CD4-positive, alpha-beta memory T cell (primary cell): ENCODE measurements at regions of chr2 and their contacts with region 1.

Region 1: DNA sequence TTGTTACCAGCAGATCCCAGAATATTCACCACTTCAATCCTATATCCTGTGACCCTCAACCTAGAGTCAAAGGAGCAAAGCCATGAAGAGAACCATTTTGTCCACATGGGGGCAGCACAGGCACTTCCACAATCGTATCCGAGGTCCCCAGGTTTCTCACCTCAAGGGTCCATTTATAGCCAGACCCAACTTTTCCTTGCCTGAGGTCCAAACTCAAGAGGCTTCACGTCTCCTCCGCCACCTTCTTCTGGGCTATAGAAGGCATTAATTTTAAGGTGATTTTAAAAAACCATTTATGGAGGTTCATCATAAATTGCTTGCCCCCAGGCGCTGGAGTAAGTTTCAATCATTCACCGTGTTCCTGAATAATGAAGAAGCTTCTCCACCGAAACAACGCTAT is 111.6 kb upstream of the NABP1 start:
- DNase-seq: peak; percentile 47 to 63 (median 52)
- H3K4me3 ChIP-seq: no peak overlapping the region
- H3K4me3 Mint-ChIP-seq: no peak overlapping the region
- H3K27ac ChIP-seq: no peak overlapping the region
- H3K27ac Mint-ChIP-seq: no peak overlapping the region
- H3K4me1 ChIP-seq: peaks cover 19% of the 10 kb centered on the region
- H3K4me1 Mint-ChIP-seq: peaks cover 15 to 33% (median 25%) of the 10 kb centered on the region in 4 donors
- H3K27me3 ChIP-seq: peaks cover 3% of the 10 kb centered on the region
- H3K27me3 Mint-ChIP-seq: peaks cover 11 to 21% of the 10 kb centered on the region in 2 donors

Region 2: GRCh38 chr2:191245046-191245868 is 321.1 kb before region 1 on chr2 and contains the start of gene MYO1B:
- CTCF ChIA-PET with region 1: no interaction called
- POLR2A ChIA-PET with region 1: no interaction called
- intact Hi-C with region 1: no loop called
- DNase-seq: peak; percentile 26 to 42 (median 39)
- H3K4me3 ChIP-seq: peak within 1 kb of the TSS; percentile 7 to 42
- H3K4me3 Mint-ChIP-seq: peak within 1 kb of the TSS; percentile 79 to 89 (median 86)
- H3K27ac ChIP-seq: no peak within 1 kb of the TSS
- H3K27ac Mint-ChIP-seq: peak within 1 kb of the TSS in 1 of 7 donors; percentile 52
- H3K4me1 ChIP-seq: peaks cover 9% of the 10 kb centered on the region
- H3K4me1 Mint-ChIP-seq: peaks cover 3 to 8% (median 6%) of the 10 kb centered on the region in 4 donors
- H3K27me3 ChIP-seq: no peaks in the 10 kb centered on the region
- H3K27me3 Mint-ChIP-seq: peaks cover 16% of the 10 kb centered on the region in 2 donors
- total RNA-seq, gene MYO1B: 0.12 to 0.14 TPM

Region 3: DNA sequence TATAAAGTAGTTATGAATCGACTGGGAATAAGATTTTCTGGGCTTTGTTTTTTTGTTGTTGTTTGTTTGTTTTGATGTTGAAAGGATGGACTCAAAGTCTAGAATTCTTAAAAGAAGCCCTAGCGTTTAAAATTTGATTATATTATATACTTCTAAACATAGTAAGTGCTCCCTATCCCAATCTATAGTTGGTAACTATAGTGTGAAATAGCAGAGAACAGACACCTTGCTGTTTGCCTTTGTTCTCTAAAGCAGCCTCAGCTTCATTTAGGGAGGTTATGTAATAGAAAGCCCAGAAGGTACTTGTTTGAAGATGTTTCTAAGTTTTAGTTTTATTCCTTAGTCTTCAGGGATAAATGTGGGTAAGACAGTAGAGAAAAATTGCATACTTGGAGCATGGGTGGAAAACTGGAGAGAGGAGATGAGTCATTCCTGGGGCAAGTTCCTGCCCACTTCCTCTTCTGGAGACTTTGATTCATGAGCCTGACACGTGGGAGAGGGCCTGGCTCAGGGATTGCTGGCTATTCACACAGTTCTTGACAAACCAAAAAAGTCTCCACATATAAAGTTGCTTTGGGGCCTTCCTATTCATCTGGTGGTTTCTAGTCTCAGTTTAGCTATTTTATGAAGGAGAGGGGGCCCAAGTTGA is 189.2 kb before region 1 on chr2:
- CTCF ChIA-PET with region 1: no interaction called
- POLR2A ChIA-PET with region 1: no interaction called
- intact Hi-C with region 1: no loop called
- DNase-seq: no peak
- H3K4me3 ChIP-seq: no peak overlapping the region
- H3K4me3 Mint-ChIP-seq: no peak overlapping the region
- H3K27ac ChIP-seq: no peak overlapping the region
- H3K27ac Mint-ChIP-seq: no peak overlapping the region
- H3K4me1 ChIP-seq: no peaks in the 10 kb centered on the region
- H3K4me1 Mint-ChIP-seq: no peaks in the 10 kb centered on the region
- H3K27me3 ChIP-seq: no peaks in the 10 kb centered on the region
- H3K27me3 Mint-ChIP-seq: no peaks in the 10 kb centered on the region

Region 4: GRCh38 chr2:191691016-191691735 is 124.8 kb after region 1 on chr2:
- CTCF ChIA-PET with region 1: interaction called, 63 read pairs
- POLR2A ChIA-PET with region 1: interaction called, 10 read pairs
- intact Hi-C with region 1: loop called (anchors 1 kb)
- DNase-seq: peak; percentile 61 to 67 (median 65)
- H3K4me3 ChIP-seq: no peak overlapping the region
- H3K4me3 Mint-ChIP-seq: no peak overlapping the region
- H3K27ac ChIP-seq: no peak overlapping the region
- H3K27ac Mint-ChIP-seq: peak overlapping the region; percentile 40 to 90 (median 73)
- H3K4me1 ChIP-seq: peaks cover 30% of the 10 kb centered on the region
- H3K4me1 Mint-ChIP-seq: peaks cover 20 to 46% (median 32%) of the 10 kb centered on the region in 4 donors
- H3K27me3 ChIP-seq: no peaks in the 10 kb centered on the region
- H3K27me3 Mint-ChIP-seq: no peaks in the 10 kb centered on the region

Region 5: GRCh38 chr2:191811807-191812602 is 245.7 kb after region 1 on chr2:
- CTCF ChIA-PET with region 1: no interaction called
- POLR2A ChIA-PET with region 1: no interaction called
- intact Hi-C with region 1: loop called (anchors 10 kb)
- DNase-seq: peak in 4 of 5 donors; percentile 5 to 16 (median 10)
- H3K4me3 ChIP-seq: no peak overlapping the region
- H3K4me3 Mint-ChIP-seq: no peak overlapping the region
- H3K27ac ChIP-seq: no peak overlapping the region
- H3K27ac Mint-ChIP-seq: no peak overlapping the region
- H3K4me1 ChIP-seq: no peaks in the 10 kb centered on the region
- H3K4me1 Mint-ChIP-seq: peaks cover 0 to 1% (median 0%) of the 10 kb centered on the region in 4 donors
- H3K27me3 ChIP-seq: no peaks in the 10 kb centered on the region
- H3K27me3 Mint-ChIP-seq: peaks cover 8 to 13% of the 10 kb centered on the region in 2 donors